Heart left ventricle (tissue), 16 donors: ENCODE measurements at regions of chr10 and their contacts with region 1.

Region 1: DNA sequence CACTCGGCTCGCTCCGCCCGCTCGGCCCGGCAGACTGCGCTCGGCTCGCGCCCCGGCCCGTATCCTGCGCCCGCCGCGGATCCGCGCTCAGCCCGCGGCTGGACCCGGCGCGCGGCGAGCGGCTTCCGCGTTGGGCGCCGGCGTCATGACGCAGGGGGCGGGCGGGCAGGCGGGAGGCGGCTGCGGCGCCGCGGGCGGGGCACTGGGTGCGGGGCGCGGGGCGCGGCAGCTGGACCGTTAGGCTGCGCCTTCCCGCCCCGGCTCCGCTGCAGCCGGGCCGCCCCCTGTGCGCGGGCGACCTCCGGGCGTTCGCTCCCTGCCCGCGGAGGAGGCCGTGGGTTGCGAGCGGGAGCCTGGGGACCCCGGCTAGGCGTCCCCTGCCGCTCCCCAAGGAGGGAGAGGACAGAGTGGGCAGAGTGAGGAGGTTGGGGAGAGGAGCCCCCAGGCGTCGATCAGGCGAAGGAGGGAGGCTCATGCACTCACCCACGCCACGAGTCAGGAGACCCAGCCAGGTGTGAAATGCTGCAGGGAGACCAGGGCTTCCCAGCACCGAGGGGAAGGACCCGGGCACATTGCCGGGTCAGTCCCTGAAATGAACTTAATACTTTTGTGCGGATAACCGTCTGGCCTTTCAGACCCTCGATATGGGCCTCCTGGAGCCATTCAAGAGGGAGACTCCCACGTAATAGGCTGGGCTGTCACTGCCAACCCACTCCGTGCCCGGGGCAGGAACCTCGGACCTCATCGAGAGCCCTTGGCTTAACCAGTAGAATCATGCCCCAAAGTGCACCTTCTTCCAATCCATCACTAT is at the start of gene PIP4K2A:
- DNase-seq: peak; percentile 75 to 91 (median 85)
- ATAC-seq: peak; percentile 69 to 93 (median 88)
- H3K4me3 ChIP-seq: peak within 1 kb of the TSS; percentile 75 to 98 (median 95)
- H3K27ac ChIP-seq: peak within 1 kb of the TSS; percentile 72 to 93 (median 82)
- H3K4me1 ChIP-seq: peaks cover 0 to 34% (median 21%) of the 10 kb centered on the region in 12 donors
- H3K27me3 ChIP-seq: no peaks in the 10 kb centered on the region
- CTCF ChIP-seq: no peak
- POLR2A ChIP-seq: peak in 1 of 2 donors; percentile 47
- total RNA-seq, gene PIP4K2A: 9.2 to 35.6 (median 13.7) TPM

Region 2: DNA sequence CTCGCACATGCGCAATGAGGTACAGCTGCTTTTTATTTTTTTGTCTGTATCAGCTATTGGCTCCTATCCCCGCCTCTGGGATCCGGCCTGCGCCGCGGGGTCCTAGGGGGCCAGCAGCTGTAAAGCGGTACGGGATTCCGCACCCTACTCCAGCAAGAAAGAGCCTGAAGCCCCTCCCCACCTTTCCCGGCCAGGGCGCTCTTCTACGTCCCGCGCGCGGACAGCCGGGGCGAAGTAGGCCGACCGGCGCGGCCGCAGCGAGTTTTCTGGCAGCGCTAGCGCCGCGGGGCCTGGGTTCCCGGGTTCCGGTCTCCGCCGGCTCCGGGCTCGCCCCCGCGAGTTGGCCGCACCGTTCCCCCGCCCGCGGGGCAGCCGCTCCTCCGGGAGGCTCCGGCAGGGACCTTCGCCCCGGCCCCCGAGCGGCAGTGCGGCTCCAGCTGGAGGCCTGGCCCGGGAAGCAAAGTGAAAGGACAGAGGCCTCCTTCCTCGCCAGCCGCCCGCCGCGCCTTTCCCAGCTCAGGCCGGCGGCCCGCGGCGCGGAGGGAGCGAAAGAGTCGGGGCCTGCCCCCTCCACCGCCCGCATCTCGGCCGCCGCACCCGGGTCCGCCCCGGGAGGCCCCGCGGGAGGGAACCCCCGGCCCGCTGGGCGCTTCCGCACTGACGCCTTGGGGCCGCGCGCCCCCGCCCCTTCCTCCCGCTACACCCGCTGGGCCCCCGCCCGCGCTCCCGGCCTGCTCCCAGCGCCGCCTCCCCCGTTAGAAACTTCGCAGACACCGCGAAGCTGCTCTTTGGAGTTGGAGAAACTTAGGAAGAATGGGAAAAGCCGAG is 374.1 kb before region 1 on chr10:
- intact Hi-C with region 1: loop called in 2 of 10 experiments (anchors 10 kb)
- DNase-seq: peak; percentile 69 to 84 (median 72)
- ATAC-seq: peak; percentile 68 to 87 (median 86)
- H3K4me3 ChIP-seq: peak overlapping the region; percentile 62 to 94 (median 81)
- H3K27ac ChIP-seq: peak overlapping the region; percentile 81 to 97 (median 92)
- H3K4me1 ChIP-seq: peaks cover 8 to 37% (median 18%) of the 10 kb centered on the region in 12 donors
- H3K27me3 ChIP-seq: peaks cover 66 to 91% (median 84%) of the 10 kb centered on the region in 9 donors
- CTCF ChIP-seq: no peak
- POLR2A ChIP-seq: peak in 1 of 2 donors; percentile 57

Region 3: GRCh38 chr10:22580711-22581110 is 134.0 kb before region 1 on chr10:
- intact Hi-C with region 1: loop called in 1 of 10 experiments (anchors 10 kb)
- DNase-seq: no peak
- ATAC-seq: no peak
- H3K4me3 ChIP-seq: no peak overlapping the region
- H3K27ac ChIP-seq: no peak overlapping the region
- H3K4me1 ChIP-seq: no peaks in the 10 kb centered on the region
- H3K27me3 ChIP-seq: no peaks in the 10 kb centered on the region
- CTCF ChIP-seq: no peak
- POLR2A ChIP-seq: no peak

Region 4: DNA sequence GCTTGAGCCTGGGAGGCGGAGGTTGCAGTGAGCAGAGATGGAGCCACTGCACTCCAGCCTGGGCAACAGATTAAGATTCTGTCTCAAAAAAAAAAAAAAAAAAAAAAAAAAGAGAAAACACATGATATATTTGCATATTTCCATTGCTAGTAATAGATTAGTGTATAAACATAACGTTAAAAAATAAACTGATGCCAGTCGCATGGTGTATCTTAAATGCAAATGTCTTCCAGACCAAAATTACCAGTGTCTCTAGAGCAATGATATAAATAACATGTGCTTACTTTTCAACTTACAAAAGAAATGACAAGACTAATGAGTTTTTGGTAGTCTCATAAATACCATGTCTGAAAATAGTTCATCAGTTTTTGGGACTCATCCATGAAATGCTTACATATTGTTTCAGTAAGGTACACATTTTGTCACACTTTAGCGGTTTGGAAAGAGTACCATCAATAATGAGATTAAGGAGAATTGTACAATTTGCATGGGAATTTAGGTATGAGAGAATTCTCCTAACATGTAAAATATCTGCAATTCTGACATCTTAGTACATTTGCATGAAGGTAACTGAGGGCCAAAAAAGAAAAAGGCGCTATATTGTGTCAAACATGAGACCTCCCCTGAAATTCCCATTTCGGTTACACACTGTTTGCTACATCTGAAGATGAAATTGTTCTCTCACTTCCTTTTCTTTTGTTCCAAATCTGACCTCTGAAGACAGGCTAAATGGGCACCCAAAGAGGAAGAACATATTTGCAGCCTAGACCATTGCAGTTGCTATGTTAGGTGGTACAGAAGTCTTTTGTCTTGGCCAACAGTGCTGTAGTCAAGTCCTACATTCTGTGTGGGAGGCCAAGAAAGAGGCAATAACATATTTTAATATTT is 51.2 kb after region 1 on chr10:
- intact Hi-C with region 1: loop called in 1 of 10 experiments (anchors 5 kb)
- DNase-seq: no peak
- ATAC-seq: peak in 3 of 4 donors; percentile 20 to 38 (median 38)
- H3K4me3 ChIP-seq: no peak overlapping the region
- H3K27ac ChIP-seq: peak overlapping the region in 3 of 12 donors; percentile 2 to 24 (median 6)
- H3K4me1 ChIP-seq: peaks cover 0 to 44% (median 16%) of the 10 kb centered on the region in 12 donors
- H3K27me3 ChIP-seq: no peaks in the 10 kb centered on the region
- CTCF ChIP-seq: no peak
- POLR2A ChIP-seq: no peak

Region 5: DNA sequence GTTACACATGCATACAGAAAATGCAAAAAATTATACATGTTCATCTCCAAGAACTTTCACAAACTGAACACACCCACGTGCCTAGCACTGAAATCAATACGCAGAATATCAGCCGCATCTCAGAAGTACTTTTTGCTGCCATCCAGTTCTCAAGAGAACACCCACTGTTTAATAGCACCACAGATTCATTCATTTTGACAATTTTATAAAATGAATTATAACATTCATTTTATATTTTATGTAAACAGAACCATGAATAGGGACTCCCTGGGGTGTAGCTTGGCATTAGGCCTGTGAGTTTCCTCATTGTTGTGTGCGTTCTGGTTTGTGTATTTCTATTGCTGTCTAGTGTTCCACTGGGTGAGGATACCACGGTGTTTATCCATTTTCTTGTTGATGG is 77.0 kb after region 1 on chr10:
- intact Hi-C with region 1: no loop called
- DNase-seq: no peak
- ATAC-seq: no peak
- H3K4me3 ChIP-seq: no peak overlapping the region
- H3K27ac ChIP-seq: no peak overlapping the region
- H3K4me1 ChIP-seq: no peaks in the 10 kb centered on the region
- H3K27me3 ChIP-seq: peaks cover 0 to 9% (median 0%) of the 10 kb centered on the region in 9 donors
- CTCF ChIP-seq: no peak
- POLR2A ChIP-seq: no peak

Region 6: GRCh38 chr10:22854935-22855421 is 140.3 kb after region 1 on chr10:
- intact Hi-C with region 1: loop called in 1 of 10 experiments (anchors 10 kb)
- DNase-seq: peak in 1 of 5 donors; percentile 52
- ATAC-seq: peak; percentile 89 to 98 (median 95)
- H3K4me3 ChIP-seq: no peak overlapping the region
- H3K27ac ChIP-seq: peak overlapping the region in 10 of 12 donors; percentile 2 to 89 (median 44)
- H3K4me1 ChIP-seq: peaks cover 0 to 24% (median 7%) of the 10 kb centered on the region in 12 donors
- H3K27me3 ChIP-seq: no peaks in the 10 kb centered on the region
- CTCF ChIP-seq: peak in 8 of 12 donors; percentile 13 to 48 (median 24)
- POLR2A ChIP-seq: no peak